ENCODE measurements at regions of chr1 and their contacts with region 1.

Region 1: DNA sequence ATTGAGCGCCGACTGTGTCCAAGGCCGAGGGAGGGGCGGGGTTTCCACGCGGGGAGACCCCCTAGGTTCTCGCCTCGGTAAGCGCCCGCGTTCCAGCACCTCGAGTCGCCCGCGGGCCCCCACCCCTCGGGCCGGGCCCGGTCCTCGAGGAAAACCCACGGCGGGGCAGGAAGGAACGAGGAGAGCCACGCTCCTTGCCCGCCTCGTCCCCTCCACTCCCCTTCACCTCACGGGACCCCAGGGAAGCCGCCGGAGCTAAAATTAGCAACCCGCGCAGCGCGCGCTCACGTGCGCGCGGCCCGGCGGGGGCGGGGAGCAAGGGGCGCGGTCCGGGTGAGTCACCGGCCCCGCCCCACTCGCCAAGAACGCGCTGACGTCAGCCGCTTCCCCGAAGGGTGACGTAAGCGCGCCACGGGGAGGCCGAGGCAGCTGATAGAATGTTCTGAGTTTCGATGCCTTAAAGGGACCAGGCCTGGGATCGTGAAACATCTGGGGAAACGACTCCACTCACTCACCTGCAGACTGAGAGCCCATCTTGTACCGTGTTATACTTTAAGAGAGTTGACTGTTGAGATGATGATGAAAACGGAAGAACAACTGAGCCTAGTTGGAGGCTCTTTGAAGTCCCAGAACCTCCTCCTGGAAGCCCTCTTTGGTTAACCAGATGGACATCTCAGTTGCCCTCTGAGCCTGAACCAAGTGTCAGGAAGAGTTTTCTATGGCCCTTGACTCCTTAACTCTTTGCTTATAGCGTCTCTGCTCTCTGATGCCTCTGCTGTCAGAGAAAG is 49.7 kb upstream of the ATF3 start:
- DNase-seq: peak; percentile 92 to 97 (median 97)
- ATAC-seq: peak; percentile 96 to 97
- H3K4me3 ChIP-seq: peak overlapping the region; percentile 58
- H3K27ac ChIP-seq: peak overlapping the region; percentile 73
- H3K4me1 ChIP-seq: no peaks in the 10 kb centered on the region
- H3K27me3 ChIP-seq: no peaks in the 10 kb centered on the region

Region 2: DNA sequence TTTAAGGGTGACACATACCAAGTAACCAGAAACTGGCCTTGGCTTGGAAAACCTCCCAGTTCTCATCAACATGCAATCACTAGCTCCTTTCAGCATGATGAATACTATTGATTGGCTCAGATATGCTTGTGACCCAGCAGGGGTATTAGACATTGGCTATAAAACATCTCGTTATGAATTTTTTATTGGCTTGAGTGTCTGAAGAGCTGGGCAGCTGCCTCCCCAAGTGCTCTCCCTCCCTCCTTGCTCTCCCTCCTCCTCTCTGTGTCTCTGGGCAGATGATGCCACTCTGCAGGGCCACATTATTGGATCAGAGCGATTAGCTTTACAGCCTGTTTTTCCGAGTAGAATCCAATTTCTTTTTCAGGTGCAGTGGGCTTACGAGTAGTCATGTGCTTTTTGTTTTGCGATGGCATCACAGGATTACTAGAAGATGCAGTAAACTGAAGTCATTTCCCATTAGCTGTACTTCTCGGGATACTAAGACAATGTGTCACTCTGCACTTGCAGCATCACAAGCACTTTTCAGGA is 29.6 kb before region 1 on chr1:
- intact Hi-C with region 1: no loop called
- DNase-seq: no peak
- ATAC-seq: no peak
- H3K4me3 ChIP-seq: no peak overlapping the region
- H3K27ac ChIP-seq: no peak overlapping the region
- H3K4me1 ChIP-seq: no peaks in the 10 kb centered on the region
- H3K27me3 ChIP-seq: no peaks in the 10 kb centered on the region

Region 3: GRCh38 chr1:212608209-212608955 is 49.5 kb after region 1 on chr1 and contains the start of gene ATF3:
- intact Hi-C with region 1: loop called in 1 of 4 experiments (anchors 10 kb)
- DNase-seq: peak; percentile 100
- ATAC-seq: peak; percentile 96 to 98
- H3K4me3 ChIP-seq: peak within 1 kb of the TSS; percentile 91
- H3K27ac ChIP-seq: peak within 1 kb of the TSS; percentile 95
- H3K4me1 ChIP-seq: peaks cover 6% of the 10 kb centered on the region
- H3K27me3 ChIP-seq: no peaks in the 10 kb centered on the region
- total RNA-seq, gene ATF3: 6.9 to 24.4 (median 7.9) TPM

Region 4: GRCh38 chr1:212630158-212630900 is 71.4 kb after region 1 on chr1:
- intact Hi-C with region 1: no loop called
- DNase-seq: peak; percentile 44 to 82 (median 76)
- ATAC-seq: peak; percentile 86 to 88
- H3K4me3 ChIP-seq: no peak overlapping the region
- H3K27ac ChIP-seq: no peak overlapping the region
- H3K4me1 ChIP-seq: peaks cover 4% of the 10 kb centered on the region
- H3K27me3 ChIP-seq: no peaks in the 10 kb centered on the region

Measured in right cardiac atrium (tissue), 5 donors.